ENCODE measurements at regions of chrX and their contacts with region 1.

Region 1: DNA sequence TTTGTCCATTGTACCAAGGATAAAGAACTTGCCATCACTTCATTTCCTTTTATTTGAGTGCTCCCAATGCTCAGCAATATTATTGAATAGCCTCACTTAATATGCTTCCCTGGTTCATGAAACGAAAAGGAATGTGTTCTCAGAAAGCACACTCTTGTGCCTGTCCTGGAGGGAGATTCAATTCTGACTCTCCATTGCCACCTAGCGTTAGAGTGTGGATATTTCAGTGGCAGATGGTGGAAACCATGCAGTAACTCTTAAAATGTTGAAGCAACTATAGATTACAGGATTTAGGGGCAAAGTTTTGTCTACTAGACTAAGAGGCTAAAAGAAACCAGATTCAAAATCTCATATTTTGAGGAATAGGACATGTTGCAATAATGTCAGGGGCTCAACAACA is 36.0 kb downstream of the GAB3 start:
- DNase-seq: peak; percentile 80
- H3K4me3 Mint-ChIP-seq: no peak overlapping the region
- H3K27ac Mint-ChIP-seq: no peak overlapping the region
- H3K4me1 Mint-ChIP-seq: peaks cover 42% of the 10 kb centered on the region
- H3K27me3 Mint-ChIP-seq: no peaks in the 10 kb centered on the region
- CTCF ChIP-seq: peak; percentile 79

Region 2: GRCh38 chrX:154727871-154728270 is 12.9 kb after region 1 on chrX:
- CTCF ChIA-PET with region 1: interaction called, 35 read pairs
- POLR2A ChIA-PET with region 1: interaction called, 37 read pairs
- intact Hi-C with region 1: no loop called
- DNase-seq: peak; percentile 90
- H3K4me3 Mint-ChIP-seq: peak overlapping the region; percentile 32
- H3K27ac Mint-ChIP-seq: peak overlapping the region; percentile 83
- H3K4me1 Mint-ChIP-seq: peaks cover 85% of the 10 kb centered on the region
- H3K27me3 Mint-ChIP-seq: no peaks in the 10 kb centered on the region
- CTCF ChIP-seq: no peak

Region 3: DNA sequence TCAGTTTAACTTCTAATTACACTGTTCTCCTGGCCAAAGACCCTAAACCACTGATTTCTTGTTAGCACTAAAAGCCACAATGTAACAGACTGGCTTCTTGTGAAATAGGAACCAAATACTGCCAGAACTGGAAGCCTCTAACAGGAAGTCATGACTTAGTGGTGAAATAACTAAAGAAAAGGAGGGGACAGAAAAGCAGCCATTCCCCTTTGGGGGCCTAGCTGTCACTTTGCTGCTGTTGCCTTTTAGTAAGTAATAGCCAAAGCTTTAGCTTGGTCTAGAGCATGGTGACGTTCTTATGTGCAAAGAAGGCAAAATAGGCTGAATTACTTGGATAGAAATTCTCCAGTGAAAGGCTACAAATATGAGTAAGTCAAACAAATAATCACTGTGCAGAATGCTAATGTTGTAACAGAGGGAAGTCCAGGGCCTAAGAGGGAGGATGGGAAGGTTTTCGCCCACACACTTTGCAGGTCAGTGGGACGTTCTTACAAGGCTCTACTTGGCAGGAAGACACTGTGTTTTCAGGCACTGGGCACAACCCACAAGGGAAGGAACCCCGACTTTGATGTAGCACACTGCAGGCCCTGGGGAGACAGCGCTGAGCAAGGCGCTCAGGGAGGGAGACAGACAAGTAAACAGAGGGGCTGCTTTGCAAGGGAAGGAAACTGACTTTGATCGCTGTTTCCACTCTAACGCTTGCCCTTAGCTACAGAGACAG is 19.3 kb after region 1 on chrX:
- CTCF ChIA-PET with region 1: interaction called, 35 read pairs
- POLR2A ChIA-PET with region 1: interaction called, 37 read pairs
- intact Hi-C with region 1: no loop called
- DNase-seq: peak; percentile 89
- H3K4me3 Mint-ChIP-seq: peak overlapping the region; percentile 12
- H3K27ac Mint-ChIP-seq: peak overlapping the region; percentile 77
- H3K4me1 Mint-ChIP-seq: peaks cover 89% of the 10 kb centered on the region
- H3K27me3 Mint-ChIP-seq: no peaks in the 10 kb centered on the region
- CTCF ChIP-seq: no peak

Region 4: GRCh38 chrX:154840856-154841255 is 125.9 kb after region 1 on chrX:
- CTCF ChIA-PET with region 1: interaction called, 4 read pairs
- POLR2A ChIA-PET with region 1: no interaction called
- intact Hi-C with region 1: loop called (anchors 1 kb)
- DNase-seq: peak; percentile 63
- H3K4me3 Mint-ChIP-seq: no peak overlapping the region
- H3K27ac Mint-ChIP-seq: no peak overlapping the region
- H3K4me1 Mint-ChIP-seq: no peaks in the 10 kb centered on the region
- H3K27me3 Mint-ChIP-seq: peaks cover 42% of the 10 kb centered on the region
- CTCF ChIP-seq: peak; percentile 51

Measured in MCF 10A (cell line).